HEK293 (cell line): ENCODE measurements at regions of chr3 and their contacts with region 1.

Region 1: GRCh38 chr3:102673271-102674115 is 238.7 kb downstream of the ZPLD1 start:
- H3K4me3 ChIP-seq: no peak overlapping the region
- H3K27ac ChIP-seq: no peak overlapping the region
- H3K4me1 ChIP-seq: no peaks in the 10 kb centered on the region
- CTCF ChIP-seq: peak; percentile 50; the same call in 1 of the 2 replicates

Region 2: GRCh38 chr3:102686792-102687191 is 13.3 kb after region 1 on chr3:
- CTCF ChIA-PET with region 1: interaction called, 12 read pairs
- POLR2A ChIA-PET with region 1: no interaction called
- H3K4me3 ChIP-seq: no peak overlapping the region
- H3K27ac ChIP-seq: no peak overlapping the region
- H3K4me1 ChIP-seq: no peaks in the 10 kb centered on the region
- CTCF ChIP-seq: no peak

Region 3: GRCh38 chr3:102741108-102741507 is 67.6 kb after region 1 on chr3:
- CTCF ChIA-PET with region 1: interaction called, 10 read pairs
- POLR2A ChIA-PET with region 1: no interaction called
- H3K4me3 ChIP-seq: no peak overlapping the region
- H3K27ac ChIP-seq: no peak overlapping the region
- H3K4me1 ChIP-seq: no peaks in the 10 kb centered on the region
- CTCF ChIP-seq: no peak

Region 4: GRCh38 chr3:103047640-103048039 is 374.1 kb after region 1 on chr3:
- CTCF ChIA-PET with region 1: no interaction called
- POLR2A ChIA-PET with region 1: no interaction called
- H3K4me3 ChIP-seq: no peak overlapping the region
- H3K27ac ChIP-seq: no peak overlapping the region
- H3K4me1 ChIP-seq: no peaks in the 10 kb centered on the region
- CTCF ChIP-seq: no peak

Region 5: DNA sequence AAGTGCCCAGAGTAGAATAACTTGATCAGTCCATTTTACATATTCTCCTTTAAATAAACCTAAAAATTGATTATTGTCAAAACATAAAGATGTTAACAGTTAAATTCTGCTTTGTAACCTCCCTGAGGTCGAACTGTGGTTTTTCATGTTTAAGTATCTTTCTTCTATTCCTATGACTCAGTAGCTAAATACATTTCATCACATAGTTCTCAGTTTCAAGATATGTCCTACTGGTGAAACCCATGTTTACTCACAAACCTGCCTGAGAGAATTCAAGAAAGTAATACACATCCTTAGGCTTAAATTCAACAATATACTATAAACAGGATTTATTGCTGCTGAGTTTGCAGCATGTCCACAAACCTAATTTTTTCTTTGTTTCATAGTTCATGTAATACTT is 454.2 kb after region 1 on chr3:
- CTCF ChIA-PET with region 1: no interaction called
- POLR2A ChIA-PET with region 1: no interaction called
- H3K4me3 ChIP-seq: no peak overlapping the region
- H3K27ac ChIP-seq: no peak overlapping the region
- H3K4me1 ChIP-seq: no peaks in the 10 kb centered on the region
- CTCF ChIP-seq: no peak